T-cell (primary cell): ENCODE measurements at regions of chr11 and their contacts with region 1.

Region 1: DNA sequence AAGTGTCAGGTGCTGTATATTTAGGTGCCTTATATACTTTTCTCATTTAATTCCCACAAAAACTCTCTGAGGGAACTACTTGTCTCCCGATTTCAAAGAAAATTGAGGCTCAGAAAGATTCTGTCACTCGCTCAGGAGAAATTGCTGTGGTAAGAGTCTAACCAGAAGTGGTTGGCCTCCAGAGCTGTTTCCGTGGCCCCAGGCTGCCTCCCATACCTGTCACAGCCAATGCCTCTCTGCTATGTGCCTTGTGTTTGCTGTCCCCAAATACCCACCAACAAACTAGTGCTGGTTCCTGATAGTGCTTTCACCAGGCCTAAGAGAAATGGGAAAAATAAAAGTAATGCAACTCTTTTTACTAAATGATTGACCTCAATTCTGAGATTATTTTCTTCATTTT is 21.0 kb upstream of the TMEM86A start:
- DNase-seq: no peak
- ATAC-seq: no peak
- H3K4me3 ChIP-seq: no peak overlapping the region
- H3K4me3 Mint-ChIP-seq: no peak overlapping the region
- H3K27ac ChIP-seq: no peak overlapping the region
- H3K27ac Mint-ChIP-seq: no peak overlapping the region
- H3K4me1 ChIP-seq: peaks cover 2 to 7% of the 10 kb centered on the region in 2 experiments
- H3K4me1 Mint-ChIP-seq: peaks cover 16 to 22% (median 16%) of the 10 kb centered on the region in 3 donors
- H3K27me3 ChIP-seq: no peaks in the 10 kb centered on the region
- H3K27me3 Mint-ChIP-seq: no peaks in the 10 kb centered on the region

Region 2: DNA sequence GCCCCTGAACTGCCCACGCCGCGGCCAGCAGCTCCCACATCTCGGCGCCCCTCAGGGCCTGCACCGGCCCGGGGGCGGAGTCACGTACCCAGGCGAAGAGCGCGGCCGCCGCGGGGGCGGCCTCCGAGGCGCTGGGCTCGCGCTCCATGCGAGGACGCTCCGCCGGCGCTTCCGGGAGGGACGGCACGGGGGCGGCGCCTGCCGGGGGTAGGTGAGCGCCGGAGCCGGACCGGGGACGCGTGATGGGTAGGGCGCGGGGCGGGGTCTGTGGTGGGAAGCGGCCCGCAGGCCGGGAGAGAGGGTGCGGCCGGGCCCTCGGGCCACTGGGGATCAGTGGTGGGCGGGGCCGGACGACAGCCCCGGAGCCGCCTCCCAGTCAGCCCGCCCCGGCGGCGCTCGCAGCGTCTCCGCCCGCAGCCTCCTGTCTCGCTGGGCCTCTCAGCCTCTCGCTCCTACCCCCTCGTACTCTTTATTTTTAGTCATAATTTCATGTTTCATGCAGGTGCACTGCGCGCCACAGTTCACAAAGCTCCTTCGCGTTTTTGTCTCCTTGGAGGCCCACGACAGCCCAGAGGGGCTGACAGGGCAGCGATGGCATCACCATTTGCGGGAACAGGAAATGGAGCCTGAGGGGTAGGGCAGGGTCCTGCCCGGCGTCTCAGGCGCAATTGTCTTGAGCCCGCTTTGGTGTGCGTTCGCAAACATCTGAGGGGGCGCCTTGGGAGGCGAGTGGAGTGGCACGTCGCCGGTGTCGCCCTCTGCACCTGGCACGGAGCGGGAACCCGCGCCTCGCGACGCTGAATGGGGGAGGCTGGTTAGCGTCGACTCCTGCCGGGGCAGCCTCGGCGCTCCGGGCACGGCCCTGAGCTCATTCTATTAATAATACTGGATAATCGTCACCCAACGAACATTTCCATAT is 664.4 kb before region 1 on chr11 and contains the start of gene SERGEF:
- CTCF ChIA-PET with region 1: no interaction called
- POLR2A ChIA-PET with region 1: interaction called in 1 of 2 experiments, 13 read pairs
- DNase-seq: peak; percentile 78 to 96 (median 87)
- ATAC-seq: peak; percentile 88 to 92 (median 90)
- H3K4me3 ChIP-seq: peak within 1 kb of the TSS; percentile 61 to 97
- H3K4me3 Mint-ChIP-seq: peak within 1 kb of the TSS; percentile 96 to 100 (median 99)
- H3K27ac ChIP-seq: peak within 1 kb of the TSS; percentile 89
- H3K27ac Mint-ChIP-seq: peak within 1 kb of the TSS; percentile 97 to 98
- H3K4me1 ChIP-seq: peaks cover 7 to 25% of the 10 kb centered on the region in 2 experiments
- H3K4me1 Mint-ChIP-seq: peaks cover 29 to 35% (median 34%) of the 10 kb centered on the region in 3 donors
- H3K27me3 ChIP-seq: no peaks in the 10 kb centered on the region
- H3K27me3 Mint-ChIP-seq: no peaks in the 10 kb centered on the region
- total RNA-seq, gene SERGEF: 45.9 to 59.1 (median 55.9) TPM